Ovary (tissue), 10 donors: ENCODE measurements at regions of chr3 and their contacts with region 1.

Region 1: GRCh38 chr3:170414202-170414663 is 4.4 kb upstream of the CLDN11 start:
- DNase-seq: peak in 3 of 5 donors; percentile 49 to 63 (median 60)
- H3K4me3 ChIP-seq: no peak overlapping the region
- H3K27ac ChIP-seq: no peak overlapping the region
- H3K4me1 ChIP-seq: peaks cover 7% of the 10 kb centered on the region
- H3K27me3 ChIP-seq: no peaks in the 10 kb centered on the region
- CTCF ChIP-seq: peak; percentile 86 to 95 (median 89)
- EP300 ChIP-seq: no peak
- POLR2A ChIP-seq: no peak

Region 2: GRCh38 chr3:170307671-170308403 is 106.4 kb before region 1 on chr3:
- intact Hi-C with region 1: loop called in 1 of 4 experiments (anchors 5 kb)
- DNase-seq: no peak
- H3K4me3 ChIP-seq: no peak overlapping the region
- H3K27ac ChIP-seq: no peak overlapping the region
- H3K4me1 ChIP-seq: peaks cover 1% of the 10 kb centered on the region
- H3K27me3 ChIP-seq: no peaks in the 10 kb centered on the region
- CTCF ChIP-seq: no peak
- EP300 ChIP-seq: no peak
- POLR2A ChIP-seq: no peak

Region 3: DNA sequence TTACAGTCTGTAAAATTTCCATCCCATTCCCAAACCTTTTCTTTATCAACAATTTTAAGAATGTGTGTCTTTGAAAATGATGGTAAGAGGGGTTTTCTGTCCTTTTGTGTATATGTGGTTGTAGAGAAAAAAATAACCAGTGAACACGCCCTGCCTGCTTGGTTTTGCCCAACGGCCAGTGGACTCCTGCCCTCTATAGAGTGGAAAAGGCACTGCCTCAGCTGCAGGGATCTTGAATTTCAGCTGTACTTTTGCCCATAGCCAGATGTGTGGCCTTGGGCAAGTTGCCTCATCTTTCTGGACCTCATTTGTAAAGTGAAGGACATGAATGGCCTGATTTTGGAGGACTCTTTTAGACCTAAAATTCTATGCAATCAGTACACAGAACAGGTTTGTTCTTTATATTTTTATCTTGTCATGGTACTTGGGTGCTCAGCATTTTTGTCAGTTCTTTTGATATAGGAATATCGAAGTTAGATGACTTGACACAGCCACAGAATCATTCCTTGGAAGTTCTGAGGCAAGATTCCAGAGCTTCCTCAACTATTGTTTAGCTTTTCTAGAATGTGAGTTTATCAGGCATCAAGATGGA is 85.4 kb after region 1 on chr3:
- intact Hi-C with region 1: loop called in 1 of 4 experiments (anchors 5 kb)
- DNase-seq: peak; percentile 73 to 85 (median 82)
- H3K4me3 ChIP-seq: no peak overlapping the region
- H3K27ac ChIP-seq: peak overlapping the region in 1 of 2 donors; percentile 19
- H3K4me1 ChIP-seq: peaks cover 35% of the 10 kb centered on the region
- H3K27me3 ChIP-seq: no peaks in the 10 kb centered on the region
- CTCF ChIP-seq: peak; percentile 36 to 64 (median 59)
- EP300 ChIP-seq: no peak
- POLR2A ChIP-seq: no peak

Region 4: GRCh38 chr3:170622369-170623159 is 208.3 kb after region 1 on chr3:
- intact Hi-C with region 1: no loop called
- DNase-seq: peak; percentile 47 to 64 (median 55)
- H3K4me3 ChIP-seq: no peak overlapping the region
- H3K27ac ChIP-seq: peak overlapping the region in 1 of 2 donors; percentile 23
- H3K4me1 ChIP-seq: peaks cover 5% of the 10 kb centered on the region
- H3K27me3 ChIP-seq: no peaks in the 10 kb centered on the region
- CTCF ChIP-seq: no peak
- EP300 ChIP-seq: no peak
- POLR2A ChIP-seq: no peak

Region 5: GRCh38 chr3:170699158-170700053 is 285.2 kb after region 1 on chr3:
- intact Hi-C with region 1: loop called in 3 of 4 experiments (anchors 5 to 10 kb)
- DNase-seq: peak in 3 of 5 donors; percentile 32 to 59 (median 44)
- H3K4me3 ChIP-seq: no peak overlapping the region
- H3K27ac ChIP-seq: peak overlapping the region; percentile 28 to 70
- H3K4me1 ChIP-seq: peaks cover 12% of the 10 kb centered on the region
- H3K27me3 ChIP-seq: no peaks in the 10 kb centered on the region
- CTCF ChIP-seq: no peak
- EP300 ChIP-seq: no peak
- POLR2A ChIP-seq: no peak

Region 6: GRCh38 chr3:170811928-170812591 is 397.8 kb after region 1 on chr3:
- intact Hi-C with region 1: loop called (anchors 2 to 10 kb)
- DNase-seq: peak; percentile 76 to 90 (median 80)
- H3K4me3 ChIP-seq: no peak overlapping the region
- H3K27ac ChIP-seq: peak overlapping the region in 1 of 2 donors; percentile 68
- H3K4me1 ChIP-seq: peaks cover 16% of the 10 kb centered on the region
- H3K27me3 ChIP-seq: no peaks in the 10 kb centered on the region
- CTCF ChIP-seq: peak; percentile 84 to 97 (median 94)
- EP300 ChIP-seq: no peak
- POLR2A ChIP-seq: no peak